ENCODE measurements at regions of chr1 and their contacts with region 1.

Region 1: GRCh38 chr1:212608209-212608955 is at the start of gene ATF3:
- DNase-seq: peak; percentile 99
- ATAC-seq: peak; percentile 94 to 98 (median 95)
- H3K4me3 ChIP-seq: peak within 1 kb of the TSS; percentile 63 to 95 (median 82)
- H3K27ac ChIP-seq: peak within 1 kb of the TSS; percentile 87 to 100 (median 98)
- H3K4me1 ChIP-seq: peaks cover 11 to 60% (median 43%) of the 10 kb centered on the region in 9 donors
- H3K27me3 ChIP-seq: peaks cover 0 to 65% (median 0%) of the 10 kb centered on the region in 7 donors
- CTCF ChIP-seq: no peak
- total RNA-seq, gene ATF3: 8.4 to 684 (median 25.9) TPM

Region 2: DNA sequence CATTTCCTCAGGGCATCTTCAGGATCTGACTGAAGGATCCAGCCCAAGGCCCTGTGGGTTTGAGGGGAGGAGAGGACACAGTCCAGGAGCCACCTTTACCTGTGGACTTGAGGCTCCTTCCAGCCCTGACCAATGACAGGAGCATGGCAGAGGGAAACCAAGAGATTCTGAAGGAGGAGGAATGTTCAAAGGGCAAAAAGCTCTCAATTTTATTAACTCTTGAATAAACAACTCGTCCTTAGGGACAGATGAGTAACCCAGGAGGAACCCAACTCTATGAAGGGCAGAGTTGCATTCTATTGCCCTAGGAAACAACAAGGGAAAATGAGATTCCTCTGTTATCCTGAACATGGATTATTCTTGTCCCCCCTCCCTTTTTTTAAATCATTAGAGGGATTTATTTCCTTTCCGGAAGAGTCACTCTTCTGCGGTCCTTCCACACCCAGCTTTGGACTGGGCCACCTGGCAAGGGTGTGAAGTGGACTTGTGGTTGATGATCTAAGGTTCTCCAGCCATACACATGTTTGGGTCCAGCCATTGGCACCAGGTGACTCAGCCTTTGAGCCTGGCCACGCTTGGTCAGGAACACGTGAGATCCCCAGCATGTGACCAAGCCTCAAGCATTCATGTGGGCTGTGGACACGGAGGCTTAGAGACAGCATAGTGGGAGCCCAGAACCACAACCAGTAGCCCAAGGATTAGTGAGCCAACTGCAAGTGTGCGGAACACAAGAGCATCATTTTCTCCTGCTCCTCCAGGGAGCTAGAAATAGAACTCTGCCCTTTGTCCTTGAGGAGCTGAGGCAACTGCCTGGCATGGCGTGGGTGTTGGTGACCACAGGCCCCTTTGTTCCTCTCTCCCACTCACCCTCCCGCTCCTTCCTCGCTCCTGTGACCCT is 125.7 kb before region 1 on chr1:
- intact Hi-C with region 1: loop called in 6 of 10 experiments (anchors 1 to 5 kb)
- DNase-seq: no peak
- ATAC-seq: no peak
- H3K4me3 ChIP-seq: no peak overlapping the region
- H3K27ac ChIP-seq: no peak overlapping the region
- H3K4me1 ChIP-seq: peaks cover 0 to 14% (median 0%) of the 10 kb centered on the region in 9 donors
- H3K27me3 ChIP-seq: peaks cover 0 to 9% (median 0%) of the 10 kb centered on the region in 7 donors
- CTCF ChIP-seq: no peak

Region 3: DNA sequence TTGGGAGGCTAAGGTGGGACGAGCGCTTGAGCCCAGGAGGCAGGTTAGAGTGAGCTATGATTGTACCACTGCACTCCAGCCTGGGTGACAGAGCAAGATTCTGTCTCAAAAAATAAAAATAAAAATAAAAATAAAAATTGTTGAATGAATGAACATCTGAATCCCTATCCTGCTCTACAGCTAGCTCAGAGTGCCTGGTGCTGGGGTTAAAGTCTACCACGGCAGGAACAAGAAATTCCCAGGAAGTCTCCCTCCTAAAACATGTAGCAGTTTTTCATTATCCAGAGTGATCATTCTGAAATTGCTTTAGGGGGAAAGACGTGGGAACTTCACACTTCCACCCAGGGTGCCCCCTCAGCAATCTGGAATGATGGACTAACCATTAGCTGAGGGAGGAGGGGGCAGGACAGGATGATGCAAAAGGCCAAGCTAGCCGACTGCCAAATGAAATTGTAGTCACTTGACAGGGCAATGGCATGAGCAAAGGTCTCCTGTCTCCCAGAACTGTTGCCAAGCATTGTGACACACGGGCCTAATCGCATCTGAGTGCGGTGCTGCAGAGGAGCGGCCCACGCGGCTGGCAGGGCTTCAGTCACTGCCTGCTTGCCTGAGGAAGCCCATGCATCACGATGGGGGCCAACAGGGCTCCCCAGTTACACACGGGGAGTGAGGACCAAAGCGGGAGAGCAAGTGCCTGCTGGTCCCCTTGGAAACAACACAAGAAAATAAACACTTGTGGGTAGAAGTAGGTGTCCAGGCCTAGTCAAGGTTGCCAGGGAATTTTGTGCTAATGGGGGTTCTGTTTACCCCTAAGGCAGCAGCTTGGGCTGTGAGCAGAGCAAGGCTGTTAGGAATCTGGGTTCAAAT is 90.0 kb before region 1 on chr1:
- intact Hi-C with region 1: loop called in 1 of 10 experiments (anchors 2 kb)
- DNase-seq: peak; percentile 79 to 85
- ATAC-seq: peak; percentile 78 to 98 (median 92)
- H3K4me3 ChIP-seq: no peak overlapping the region
- H3K27ac ChIP-seq: peak overlapping the region; percentile 0 to 83 (median 62)
- H3K4me1 ChIP-seq: peaks cover 6 to 27% (median 16%) of the 10 kb centered on the region in 9 donors
- H3K27me3 ChIP-seq: peaks cover 0 to 40% (median 8%) of the 10 kb centered on the region in 7 donors
- CTCF ChIP-seq: no peak

Region 4: GRCh38 chr1:212558693-212559480 is 49.5 kb before region 1 on chr1:
- intact Hi-C with region 1: loop called in 7 of 10 experiments (anchors 1 to 10 kb)
- DNase-seq: peak; percentile 94
- ATAC-seq: peak; percentile 93 to 98 (median 96)
- H3K4me3 ChIP-seq: peak overlapping the region; percentile 49 to 96 (median 73)
- H3K27ac ChIP-seq: peak overlapping the region; percentile 85 to 99 (median 98)
- H3K4me1 ChIP-seq: peaks cover 0 to 26% (median 13%) of the 10 kb centered on the region in 9 donors
- H3K27me3 ChIP-seq: no peaks in the 10 kb centered on the region
- CTCF ChIP-seq: no peak

Region 5: DNA sequence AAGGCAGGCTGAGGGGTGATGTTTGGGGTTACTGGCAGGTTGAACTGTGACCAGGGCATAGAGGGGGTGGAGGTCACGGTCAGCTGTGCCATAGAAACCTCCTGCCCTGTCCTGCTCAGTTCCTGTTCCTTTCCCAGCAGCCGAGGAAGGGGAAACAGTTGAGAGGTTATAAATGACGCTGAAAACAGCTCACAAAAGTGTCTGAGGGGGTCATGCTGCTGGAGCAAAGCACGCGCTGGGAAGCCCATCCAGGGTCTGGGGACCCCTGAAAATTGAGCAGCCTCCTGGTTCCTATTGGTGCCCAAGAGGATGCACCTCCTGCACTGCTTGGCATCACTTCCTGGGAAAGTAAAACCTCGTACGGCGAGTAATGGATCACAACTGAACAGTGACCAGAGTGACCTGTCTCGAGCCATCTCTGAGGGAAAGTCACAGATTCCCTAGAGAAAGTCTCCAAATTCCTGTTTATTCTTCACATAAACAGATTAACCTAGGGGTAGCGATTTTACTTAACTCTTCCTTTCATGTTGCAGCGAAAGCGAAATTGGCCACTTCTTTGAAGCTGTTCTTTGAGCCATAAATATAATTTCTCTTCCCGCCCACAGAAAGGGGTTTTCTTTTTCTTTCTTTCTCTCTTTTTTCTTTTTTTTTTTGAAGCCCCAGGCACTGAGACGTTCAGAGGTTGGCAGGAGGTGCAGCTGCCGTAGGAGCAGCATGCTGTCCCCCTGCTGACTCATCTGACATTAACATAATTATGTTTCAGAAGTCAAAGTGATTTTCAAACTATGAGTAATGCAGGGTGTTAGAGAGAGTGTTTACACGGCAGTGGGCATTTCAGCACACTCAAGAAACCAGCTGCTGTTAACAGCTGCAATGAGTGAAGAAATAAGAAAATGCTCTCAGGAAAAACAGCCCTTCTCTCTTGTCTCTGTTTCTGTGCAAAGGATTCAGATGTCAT is 41.6 kb before region 1 on chr1:
- intact Hi-C with region 1: loop called in 4 of 10 experiments (anchors 2 to 5 kb)
- DNase-seq: peak in 1 of 2 donors; percentile 39
- ATAC-seq: peak; percentile 72 to 93 (median 86)
- H3K4me3 ChIP-seq: peak overlapping the region; percentile 5 to 64 (median 53)
- H3K27ac ChIP-seq: peak overlapping the region; percentile 5 to 89 (median 80)
- H3K4me1 ChIP-seq: peaks cover 0 to 19% (median 13%) of the 10 kb centered on the region in 9 donors
- H3K27me3 ChIP-seq: no peaks in the 10 kb centered on the region
- CTCF ChIP-seq: peak in 3 of 9 donors; percentile 6 to 10 (median 8)

Region 6: DNA sequence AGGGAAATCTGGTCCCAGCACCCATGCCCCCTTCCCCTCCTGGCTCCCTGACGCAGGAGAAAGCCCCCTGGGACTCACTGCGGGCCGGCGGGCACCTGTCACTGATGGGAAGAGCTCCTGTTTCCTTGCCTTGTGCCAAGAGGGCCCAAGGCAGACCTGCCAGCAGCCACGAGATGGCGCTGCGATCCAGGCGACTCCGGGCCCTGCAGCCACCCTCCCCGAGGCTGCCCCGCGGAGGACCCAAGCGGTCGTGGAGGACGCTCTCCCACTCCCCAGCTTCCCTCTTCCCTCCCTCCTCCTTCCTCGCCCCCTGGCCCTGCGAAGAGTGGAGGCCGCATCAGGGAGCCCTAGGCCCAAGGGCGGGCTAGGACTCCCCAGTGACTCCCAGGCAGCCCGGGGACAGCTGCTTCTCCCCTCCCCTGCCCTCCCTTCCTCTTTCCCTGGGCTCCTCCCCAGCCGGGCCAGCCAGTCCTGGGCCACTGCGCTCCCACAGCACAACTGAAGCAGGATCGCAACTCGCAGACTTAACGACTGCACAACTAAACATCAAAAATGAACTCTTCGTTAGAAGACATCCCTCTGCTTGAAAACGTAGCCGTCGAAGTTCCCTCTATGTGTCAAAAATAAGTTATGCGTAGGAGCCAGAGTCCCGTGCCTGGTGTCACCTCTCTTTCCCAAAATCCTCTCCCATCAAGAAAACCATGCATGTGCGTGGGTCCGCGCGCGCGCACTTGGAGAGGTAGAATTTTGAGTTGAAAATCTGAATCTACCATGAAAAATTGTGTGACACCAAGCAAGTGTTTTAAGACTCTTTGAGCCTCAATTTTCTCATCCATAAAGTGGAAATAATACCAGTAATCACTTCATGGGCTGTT is 57.1 kb after region 1 on chr1:
- intact Hi-C with region 1: loop called in 2 of 10 experiments (anchors 2 to 10 kb)
- DNase-seq: peak; percentile 85 to 87
- ATAC-seq: peak; percentile 94 to 99 (median 96)
- H3K4me3 ChIP-seq: peak overlapping the region; percentile 33 to 71 (median 64)
- H3K27ac ChIP-seq: peak overlapping the region in 9 of 10 donors; percentile 79 to 93 (median 81)
- H3K4me1 ChIP-seq: peaks cover 0 to 58% (median 31%) of the 10 kb centered on the region in 9 donors
- H3K27me3 ChIP-seq: no peaks in the 10 kb centered on the region
- CTCF ChIP-seq: peak; percentile 90 to 99 (median 96)